Activated CD8-positive, alpha-beta memory T cell treated with anti-CD3 and anti-CD28 coated beads, Interleukin-2, amount 10 ng/mL, durations not matched to agents 7 days and 5 days (primary cell): ENCODE measurements at regions of chr12 and their contacts with region 1.

Region 1: DNA sequence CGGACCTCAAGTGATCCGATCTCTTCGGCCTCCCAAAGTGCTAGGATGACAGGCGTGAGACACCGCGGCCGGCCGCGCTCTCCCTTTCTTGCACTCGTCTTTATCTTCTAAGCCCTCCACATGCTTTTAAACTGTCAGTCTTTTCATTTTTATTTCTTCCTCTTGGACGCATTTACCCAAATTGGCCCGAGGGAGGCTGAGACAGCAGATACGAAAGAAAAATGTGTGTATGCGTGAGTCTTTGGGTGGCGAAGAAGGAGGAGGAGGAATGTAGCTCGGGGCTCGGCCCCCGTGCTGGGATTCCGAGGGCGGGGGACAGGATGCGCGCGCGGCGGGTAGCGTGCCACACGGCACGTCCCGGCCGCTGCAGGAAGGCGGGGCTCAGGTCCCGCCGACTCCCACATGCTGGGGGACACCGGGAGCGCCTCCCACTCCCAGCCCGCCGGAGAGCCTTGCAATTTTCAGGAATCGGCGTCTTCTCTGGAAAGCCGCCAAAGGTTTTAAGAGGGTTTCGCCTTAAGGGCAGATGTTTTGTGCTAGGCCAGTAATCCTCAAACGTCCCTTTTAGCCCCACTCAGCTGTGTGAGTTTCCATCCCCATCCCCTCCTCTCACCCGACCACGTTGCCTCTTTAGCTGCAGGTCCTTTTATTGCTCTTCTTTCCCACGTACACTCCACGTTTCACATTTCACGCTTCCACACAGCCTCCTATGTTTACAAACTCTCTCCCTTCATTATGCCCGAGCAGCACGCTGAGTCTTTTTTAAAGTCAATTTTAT is 34.7 kb upstream of the SLC2A3 start:
- DNase-seq: peak; percentile 93
- ATAC-seq: peak; percentile 94
- H3K4me3 Mint-ChIP-seq: peak overlapping the region; percentile 78
- H3K27ac Mint-ChIP-seq: peak overlapping the region; percentile 94
- H3K4me1 Mint-ChIP-seq: peaks cover 38% of the 10 kb centered on the region
- H3K27me3 Mint-ChIP-seq: no peaks in the 10 kb centered on the region

Region 2: DNA sequence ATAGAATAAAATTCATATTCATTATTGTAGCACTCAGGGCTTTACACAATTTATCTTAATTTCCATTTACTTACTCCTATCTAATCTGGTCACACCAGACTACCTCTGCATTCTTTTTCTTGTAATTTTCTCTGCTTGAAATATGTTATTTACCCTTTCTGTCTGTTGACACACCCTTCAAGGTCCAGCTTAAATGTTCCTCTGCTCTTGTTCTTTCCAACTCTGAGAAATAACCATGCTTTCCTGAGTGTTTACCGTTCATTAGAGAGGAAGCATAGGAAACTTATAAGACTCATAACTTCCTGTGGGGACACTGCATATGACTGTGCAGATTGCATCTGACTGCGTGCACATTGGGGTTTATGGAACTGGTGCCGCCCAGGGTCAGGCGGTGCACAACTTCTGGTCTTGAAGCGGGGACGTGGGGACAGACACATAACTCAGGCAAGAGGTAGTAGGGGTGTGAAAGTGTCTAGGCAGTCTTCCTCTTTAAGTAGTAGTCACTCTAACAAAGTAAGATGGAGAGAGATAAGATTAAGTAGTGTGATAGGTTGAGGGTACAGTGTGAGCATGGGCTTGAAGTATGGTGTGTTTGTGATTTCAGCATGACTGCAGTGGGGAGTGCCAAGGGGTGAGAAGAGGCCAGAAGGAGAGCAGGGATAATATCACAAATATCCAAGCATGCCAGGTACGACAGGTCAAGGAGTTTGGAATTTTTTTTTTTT is 19.3 kb after region 1 on chr12:
- CTCF ChIA-PET with region 1: interaction called, 18 read pairs
- DNase-seq: peak; percentile 95
- ATAC-seq: peak; percentile 95
- H3K4me3 Mint-ChIP-seq: peak overlapping the region; percentile 63
- H3K27ac Mint-ChIP-seq: peak overlapping the region; percentile 96
- H3K4me1 Mint-ChIP-seq: peaks cover 42% of the 10 kb centered on the region
- H3K27me3 Mint-ChIP-seq: no peaks in the 10 kb centered on the region